ENCODE measurements at regions of chr4 and their contacts with region 1.

Region 1: DNA sequence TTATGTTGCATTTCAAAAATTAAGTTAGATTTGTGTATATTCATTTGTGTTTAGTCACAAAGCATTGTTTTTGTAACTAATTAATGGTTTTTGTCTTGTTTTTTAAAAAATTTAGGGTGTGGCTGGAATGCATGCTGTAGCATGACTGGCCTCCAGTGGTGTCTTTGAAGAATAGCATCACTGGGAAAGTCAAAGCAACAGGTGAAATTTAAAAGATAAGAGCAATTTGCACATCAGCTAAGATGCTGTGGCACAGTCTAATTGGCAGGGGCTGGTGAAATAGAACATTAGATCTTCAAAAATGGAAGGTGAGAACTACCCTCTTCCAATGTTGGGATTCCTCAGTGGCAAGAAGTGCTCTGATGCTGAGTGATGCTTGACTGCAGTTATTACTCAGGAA is 45.3 kb downstream of the ANK2 start:
- DNase-seq: peak; percentile 30
- ATAC-seq: no peak
- H3K4me3 ChIP-seq: no peak overlapping the region
- H3K27ac ChIP-seq: no peak overlapping the region
- H3K4me1 ChIP-seq: no peaks in the 10 kb centered on the region
- H3K27me3 ChIP-seq: peaks cover 3% of the 10 kb centered on the region; the same call in 1 of the 2 replicates
- CTCF ChIP-seq: peak; percentile 83

Region 2: DNA sequence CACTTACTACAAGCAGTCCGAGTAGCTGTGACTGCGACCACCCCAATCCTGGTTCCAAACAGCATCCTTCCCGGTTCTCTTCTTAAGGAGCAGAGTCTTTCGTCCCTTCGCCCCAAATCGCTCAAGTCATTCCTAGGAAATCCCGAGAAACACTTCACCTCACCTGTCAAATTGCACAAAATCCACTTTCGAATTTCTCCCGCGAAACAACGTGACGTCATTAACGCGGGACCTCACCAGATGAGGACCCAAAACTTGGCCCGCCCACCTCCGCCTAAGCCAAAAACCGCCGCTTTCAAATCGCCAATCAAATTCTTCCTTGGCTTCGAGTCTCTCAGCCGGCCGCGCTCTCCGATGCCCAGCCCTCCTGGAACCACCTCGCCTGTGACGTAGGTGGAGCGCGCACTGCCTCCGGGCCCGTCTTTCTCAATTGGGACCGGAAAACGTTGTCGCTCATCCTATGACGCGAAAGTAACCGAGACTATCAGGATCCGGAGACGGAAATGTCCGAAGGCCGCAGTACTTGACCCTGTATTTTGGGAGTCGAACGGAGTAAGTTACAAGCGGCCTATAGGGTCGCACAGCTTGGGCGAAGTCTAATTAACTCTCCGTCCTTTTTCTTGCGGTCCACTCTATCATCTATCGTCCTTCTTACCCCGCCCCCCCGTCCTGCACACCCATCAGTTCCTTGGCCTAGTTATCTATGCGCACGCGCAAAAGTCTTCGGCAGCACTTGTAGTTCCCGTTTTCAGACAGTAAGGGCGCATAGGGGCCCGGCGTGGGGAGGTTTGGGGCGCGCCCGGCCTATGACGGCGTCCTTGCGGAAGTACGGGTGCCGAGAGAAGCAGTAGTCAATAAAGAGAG is 457.9 kb before region 1 on chr4 and contains the starts of genes LARP7 and ZGRF1:
- CTCF ChIA-PET with region 1: no interaction called
- POLR2A ChIA-PET with region 1: no interaction called
- intact Hi-C with region 1: loop called (anchors 10 kb)
- DNase-seq: peak; percentile 97
- ATAC-seq: peak; percentile 94
- H3K4me3 ChIP-seq: peak within 1 kb of the TSS; percentile 81
- H3K27ac ChIP-seq: peak within 1 kb of the TSS; percentile 80
- H3K4me1 ChIP-seq: no peaks in the 10 kb centered on the region
- H3K27me3 ChIP-seq: no peaks in the 10 kb centered on the region
- CTCF ChIP-seq: peak; percentile 74
- total RNA-seq, gene LARP7: 13.0 and 17.1 TPM in 2 replicates
- total RNA-seq, gene ZGRF1: 7.3 and 10.0 TPM in 2 replicates

Region 3: GRCh38 chr4:112853662-112854256 is 241.0 kb before region 1 on chr4:
- CTCF ChIA-PET with region 1: no interaction called
- POLR2A ChIA-PET with region 1: no interaction called
- intact Hi-C with region 1: loop called (anchors 2 kb)
- DNase-seq: peak; percentile 8
- ATAC-seq: no peak
- H3K4me3 ChIP-seq: no peak overlapping the region
- H3K27ac ChIP-seq: no peak overlapping the region
- H3K4me1 ChIP-seq: peaks cover 9% of the 10 kb centered on the region; the same call in 1 of the 2 replicates
- H3K27me3 ChIP-seq: peaks cover 11% of the 10 kb centered on the region; the same call in 1 of the 2 replicates
- CTCF ChIP-seq: peak; percentile 64

Region 4: DNA sequence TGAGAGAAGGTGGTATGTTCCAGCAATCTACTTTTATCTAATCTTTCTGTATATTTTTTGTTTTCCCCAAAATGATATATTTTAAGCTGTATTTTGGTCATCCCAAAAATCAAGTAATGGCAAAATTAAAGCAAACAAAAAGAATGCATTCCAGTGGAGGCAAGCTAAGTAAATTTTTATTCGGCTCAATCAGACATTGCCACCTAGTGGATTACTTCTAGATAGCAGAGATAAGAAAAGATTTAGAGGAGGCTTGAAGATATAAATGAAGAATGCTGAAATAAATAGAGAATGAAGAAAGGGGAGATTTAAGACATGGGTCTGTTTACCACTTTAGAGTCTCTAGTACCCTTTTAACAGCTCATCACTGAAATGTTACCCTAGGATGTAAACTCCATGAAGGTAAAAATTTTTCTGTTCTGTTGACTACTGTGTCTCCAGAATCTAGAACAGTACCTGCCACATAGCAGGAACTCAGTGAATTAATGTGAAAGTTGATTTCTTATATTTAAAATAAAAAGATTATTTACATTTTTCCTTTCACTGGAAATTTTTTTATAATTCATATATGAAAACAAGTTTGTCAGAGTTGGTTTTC is 156.2 kb before region 1 on chr4:
- CTCF ChIA-PET with region 1: no interaction called
- POLR2A ChIA-PET with region 1: no interaction called
- intact Hi-C with region 1: loop called (anchors 2 kb)
- DNase-seq: peak; percentile 60
- ATAC-seq: no peak
- H3K4me3 ChIP-seq: no peak overlapping the region
- H3K27ac ChIP-seq: no peak overlapping the region
- H3K4me1 ChIP-seq: no peaks in the 10 kb centered on the region
- H3K27me3 ChIP-seq: peaks cover 6% of the 10 kb centered on the region; the same call in 1 of the 2 replicates
- CTCF ChIP-seq: peak; percentile 80

Region 5: GRCh38 chr4:112951362-112952312 is 143.2 kb before region 1 on chr4:
- CTCF ChIA-PET with region 1: interaction called, 3 read pairs
- POLR2A ChIA-PET with region 1: no interaction called
- intact Hi-C with region 1: loop called (anchors 2 kb)
- DNase-seq: peak; percentile 32
- ATAC-seq: no peak
- H3K4me3 ChIP-seq: no peak overlapping the region
- H3K27ac ChIP-seq: no peak overlapping the region
- H3K4me1 ChIP-seq: no peaks in the 10 kb centered on the region
- H3K27me3 ChIP-seq: 0 out of 2 replicates have a peak, but pooled peaks cover 4% of the 10 kb centered on the region
- CTCF ChIP-seq: peak; percentile 62

Region 6: DNA sequence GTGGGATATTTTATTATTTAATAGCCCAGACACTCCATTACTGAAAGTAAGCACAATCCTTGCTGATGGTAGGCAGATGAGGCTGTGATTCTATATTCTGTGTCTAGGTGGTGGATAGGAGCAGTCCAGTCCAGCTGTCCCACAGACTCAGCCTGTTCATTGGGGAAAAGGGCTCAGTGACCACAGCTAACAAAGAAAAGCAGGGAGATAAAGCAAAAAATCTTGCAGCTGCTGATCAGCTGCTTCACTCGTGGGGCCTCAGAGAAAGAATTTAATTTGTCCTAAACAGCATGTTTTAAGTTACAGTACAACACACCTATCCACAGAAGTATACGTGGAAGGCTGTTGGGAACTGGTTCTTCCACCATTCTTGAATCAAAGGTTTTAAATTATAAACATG is 86.1 kb before region 1 on chr4:
- CTCF ChIA-PET with region 1: no interaction called
- POLR2A ChIA-PET with region 1: no interaction called
- intact Hi-C with region 1: loop called (anchors 5 kb)
- DNase-seq: no peak
- ATAC-seq: no peak
- H3K4me3 ChIP-seq: no peak overlapping the region
- H3K27ac ChIP-seq: no peak overlapping the region
- H3K4me1 ChIP-seq: peaks cover 4% of the 10 kb centered on the region
- H3K27me3 ChIP-seq: no peaks in the 10 kb centered on the region
- CTCF ChIP-seq: no peak